H1 (cell line): ENCODE measurements at regions of chr15 and their contacts with region 1.

Region 1: GRCh38 chr15:68806220-68807060 is 14.3 kb downstream of the ANP32A start:
- DNase-seq: peak in 1 of 2 experiments; percentile 39
- H3K4me3 ChIP-seq: no peak overlapping the region
- H3K27ac ChIP-seq: no peak overlapping the region
- H3K4me1 ChIP-seq: peaks cover 5 to 14% (median 11%) of the 10 kb centered on the region in 4 experiments; a peak in 6 of 7 replicates
- H3K27me3 ChIP-seq: no peaks in the 10 kb centered on the region
- CTCF ChIP-seq: no peak
- EP300 ChIP-seq: no peak
- POLR2A ChIP-seq: no peak
- RAD21 ChIP-seq: no peak

Region 2: GRCh38 chr15:68644077-68644904 is 162.1 kb before region 1 on chr15:
- CTCF ChIA-PET with region 1: no interaction called
- POLR2A ChIA-PET with region 1: no interaction called
- DNase-seq: no peak
- H3K4me3 ChIP-seq: no peak overlapping the region
- H3K27ac ChIP-seq: no peak overlapping the region
- H3K4me1 ChIP-seq: peaks cover 0 to 12% (median 5%) of the 10 kb centered on the region in 4 experiments; a peak in 5 of 7 replicates
- H3K27me3 ChIP-seq: no peaks in the 10 kb centered on the region
- CTCF ChIP-seq: peak in 2 of 3 experiments; percentile 16 to 18; a peak in 2 of 4 replicates
- EP300 ChIP-seq: no peak
- POLR2A ChIP-seq: no peak
- RAD21 ChIP-seq: peak; percentile 31 to 51

Region 3: GRCh38 chr15:68739390-68740080 is 66.9 kb before region 1 on chr15:
- CTCF ChIA-PET with region 1: no interaction called
- POLR2A ChIA-PET with region 1: no interaction called
- DNase-seq: no peak
- H3K4me3 ChIP-seq: no peak overlapping the region
- H3K27ac ChIP-seq: no peak overlapping the region
- H3K4me1 ChIP-seq: no peaks in the 10 kb centered on the region
- H3K27me3 ChIP-seq: no peaks in the 10 kb centered on the region
- CTCF ChIP-seq: no peak
- EP300 ChIP-seq: no peak
- POLR2A ChIP-seq: no peak
- RAD21 ChIP-seq: no peak

Region 4: GRCh38 chr15:68795298-68795848 is 11.1 kb before region 1 on chr15:
- CTCF ChIA-PET with region 1: interaction called, 7 read pairs
- POLR2A ChIA-PET with region 1: interaction called, 10 read pairs
- DNase-seq: peak; percentile 72 to 82
- H3K4me3 ChIP-seq: peak overlapping the region in 3 of 4 experiments; percentile 1 to 32 (median 7); a peak in 4 of 8 replicates
- H3K27ac ChIP-seq: peak overlapping the region; percentile 61
- H3K4me1 ChIP-seq: peaks cover 22 to 51% (median 40%) of the 10 kb centered on the region in 4 experiments
- H3K27me3 ChIP-seq: no peaks in the 10 kb centered on the region; a peak in 1 of 7 replicates
- CTCF ChIP-seq: no peak
- EP300 ChIP-seq: no peak
- POLR2A ChIP-seq: peak in 1 of 2 experiments; percentile 77; a peak in 2 of 3 replicates
- RAD21 ChIP-seq: no peak

Region 5: DNA sequence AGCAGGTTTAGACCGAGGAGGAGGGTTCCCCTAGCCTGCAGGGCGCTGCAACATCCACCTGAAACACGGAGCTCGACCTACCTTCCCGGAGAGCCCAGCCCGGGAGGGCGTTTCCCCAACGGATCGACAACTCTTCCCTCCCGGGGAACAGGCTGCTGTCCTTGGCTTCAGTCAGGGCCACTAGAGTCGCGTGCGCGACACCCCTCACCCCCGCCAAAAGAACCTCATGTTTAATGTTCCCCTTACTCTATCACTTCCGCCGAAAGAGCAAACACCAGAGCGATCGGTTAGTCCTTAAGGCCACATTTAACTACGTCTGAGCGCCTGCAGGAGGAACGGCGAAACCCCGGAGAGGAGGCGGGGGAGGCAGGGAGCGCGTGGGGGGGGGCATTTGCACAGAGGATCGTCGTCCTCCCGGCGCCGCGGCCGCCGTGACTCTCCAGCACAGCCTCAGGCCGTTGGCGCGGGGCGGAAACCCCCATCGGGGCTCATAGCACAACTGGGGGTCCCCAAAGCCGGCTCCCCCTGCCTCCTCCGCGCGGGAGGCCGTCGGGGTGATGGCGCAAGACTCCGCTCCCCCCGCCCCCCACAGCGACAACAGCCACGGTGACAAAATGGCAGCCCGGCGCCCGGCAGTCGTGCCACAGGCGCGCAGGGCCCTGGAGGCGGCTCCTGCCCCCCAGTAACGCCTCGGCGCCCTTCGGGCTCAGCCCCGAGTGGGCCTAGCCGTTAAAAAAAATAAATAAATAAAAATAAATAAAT is 11.0 kb after region 1 on chr15:
- CTCF ChIA-PET with region 1: interaction called, 5 read pairs
- POLR2A ChIA-PET with region 1: interaction called, 30 read pairs
- DNase-seq: peak in 1 of 2 experiments; percentile 61
- H3K4me3 ChIP-seq: peak overlapping the region; percentile 72 to 94 (median 92)
- H3K27ac ChIP-seq: peak overlapping the region; percentile 74; the same call in 1 of the 2 replicates
- H3K4me1 ChIP-seq: peaks cover 10 to 22% (median 16%) of the 10 kb centered on the region in 4 experiments; a peak in 6 of 7 replicates
- H3K27me3 ChIP-seq: peaks cover 2 to 10% (median 7%) of the 10 kb centered on the region in 4 experiments
- CTCF ChIP-seq: no peak
- EP300 ChIP-seq: no peak
- POLR2A ChIP-seq: peak in 1 of 2 experiments; percentile 47; a peak in 1 of 3 replicates
- RAD21 ChIP-seq: no peak

Region 6: DNA sequence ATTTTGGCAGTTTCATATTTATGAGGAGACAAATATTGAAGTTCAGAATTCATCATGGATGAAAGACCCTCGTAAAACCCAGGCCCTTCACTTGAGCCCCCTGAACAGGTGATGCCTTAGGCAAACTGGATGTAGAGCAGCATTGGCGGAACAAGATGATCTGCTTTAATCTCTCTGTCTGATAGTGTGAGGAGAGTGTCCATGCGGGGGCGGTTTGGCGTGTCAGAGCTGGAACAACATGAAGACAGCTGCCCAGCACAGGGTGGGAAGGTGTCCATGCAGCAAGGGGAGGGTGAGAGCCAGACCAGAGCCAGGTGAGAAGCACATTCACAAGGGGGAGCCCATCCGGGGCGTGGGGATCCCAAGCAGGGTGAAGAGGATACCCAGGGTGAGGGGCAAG is 46.0 kb after region 1 on chr15:
- CTCF ChIA-PET with region 1: no interaction called
- POLR2A ChIA-PET with region 1: no interaction called
- DNase-seq: no peak
- H3K4me3 ChIP-seq: no peak overlapping the region
- H3K27ac ChIP-seq: no peak overlapping the region
- H3K4me1 ChIP-seq: no peaks in the 10 kb centered on the region
- H3K27me3 ChIP-seq: no peaks in the 10 kb centered on the region
- CTCF ChIP-seq: no peak
- EP300 ChIP-seq: no peak
- POLR2A ChIP-seq: no peak
- RAD21 ChIP-seq: no peak